Activated CD4-positive, alpha-beta T cell treated with anti-CD3 and anti-CD28 coated beads, Interleukin-2, amount 10 ng/mL, durations not matched to agents 24 days and 14 days (primary cell): ENCODE measurements at regions of chr6 and their contacts with region 1.

Region 1: DNA sequence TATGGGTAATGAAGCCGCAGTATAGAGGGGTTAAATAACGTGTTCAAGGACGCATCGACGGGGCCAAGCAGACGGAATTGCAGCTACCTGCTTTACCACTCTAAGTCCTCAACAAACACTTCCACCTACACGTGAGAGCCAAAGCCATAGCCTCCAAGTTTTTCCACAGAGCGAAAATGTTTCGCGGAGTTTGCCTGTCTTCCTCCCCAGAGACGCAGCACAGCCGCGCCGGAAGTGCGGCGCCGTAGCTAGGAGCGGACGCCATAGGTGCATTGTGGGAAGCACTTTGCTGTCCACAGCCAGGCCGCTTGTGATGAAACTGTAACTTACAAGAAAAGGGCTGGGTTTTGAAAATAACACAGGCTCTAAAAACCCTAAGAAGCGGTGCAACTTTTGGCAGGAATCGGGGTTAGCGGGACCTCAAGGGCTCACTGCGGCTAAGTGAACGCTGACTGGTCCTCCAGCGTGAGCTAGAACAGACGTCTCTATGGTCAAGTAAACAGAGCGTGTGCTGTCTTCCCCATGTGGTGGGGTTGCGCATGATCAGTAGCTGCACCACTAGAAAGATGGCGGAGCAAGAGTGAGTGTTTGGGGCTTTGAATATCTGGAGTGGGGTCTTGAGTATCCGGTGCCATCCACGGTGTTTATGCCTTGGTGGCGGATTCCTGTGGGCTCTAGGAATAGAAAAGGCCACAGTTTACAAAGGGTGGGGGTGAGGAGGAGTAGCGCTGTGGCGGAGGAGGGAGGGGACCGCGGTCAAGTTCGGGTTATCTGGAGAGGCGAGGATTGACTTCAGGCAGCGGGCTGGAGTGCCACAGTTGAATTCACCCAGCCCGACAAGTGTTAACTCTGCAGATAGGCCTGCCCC is at the start of gene RPL7L1:
- DNase-seq: peak; percentile 95
- H3K4me3 Mint-ChIP-seq: peak within 1 kb of the TSS; percentile 97
- H3K27ac Mint-ChIP-seq: peak within 1 kb of the TSS; percentile 100
- H3K4me1 Mint-ChIP-seq: peaks cover 17% of the 10 kb centered on the region
- H3K27me3 Mint-ChIP-seq: no peaks in the 10 kb centered on the region
- total RNA-seq, gene RPL7L1: 182 and 189 TPM in 2 replicates

Region 2: GRCh38 chr6:42217519-42218367 is 661.9 kb before region 1 on chr6 and contains the start of gene MRPS10:
- intact Hi-C with region 1: loop called (anchors 5 kb)
- DNase-seq: peak; percentile 97
- H3K4me3 Mint-ChIP-seq: peak within 1 kb of the TSS; percentile 98
- H3K27ac Mint-ChIP-seq: peak within 1 kb of the TSS; percentile 93
- H3K4me1 Mint-ChIP-seq: peaks cover 21% of the 10 kb centered on the region
- H3K27me3 Mint-ChIP-seq: no peaks in the 10 kb centered on the region
- total RNA-seq, gene MRPS10: 49.4 and 50.8 TPM in 2 replicates

Region 3: DNA sequence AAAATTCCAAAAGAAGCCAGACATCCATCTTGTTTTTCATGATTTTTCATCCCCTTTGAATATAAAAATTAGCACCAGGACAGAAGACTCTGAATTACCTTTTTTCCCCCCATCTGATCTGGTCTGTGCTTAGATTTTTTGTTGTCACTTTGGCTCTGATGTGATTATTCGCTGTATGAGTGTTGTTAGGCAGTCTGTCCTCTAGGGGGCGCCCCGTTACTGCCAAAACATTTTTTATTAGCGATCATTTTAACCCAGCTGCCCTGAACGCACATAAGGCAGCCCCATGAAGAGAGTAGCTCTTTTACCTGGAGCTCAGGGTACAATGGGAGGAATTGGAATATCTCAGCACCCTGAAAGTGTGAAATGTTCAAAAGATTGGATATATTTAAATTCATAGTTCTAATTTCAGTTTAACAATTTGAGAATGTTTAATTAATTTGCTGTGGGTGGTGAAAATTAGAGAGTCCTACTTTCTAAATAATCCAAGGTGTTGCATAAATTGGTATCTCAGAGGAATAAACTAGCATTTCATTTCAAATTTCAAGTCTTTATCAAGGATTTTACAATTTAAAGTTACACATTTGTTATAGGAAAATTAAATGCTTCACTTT is 218.0 kb before region 1 on chr6:
- intact Hi-C with region 1: loop called (anchors 1 kb)
- DNase-seq: peak; percentile 94
- H3K4me3 Mint-ChIP-seq: no peak overlapping the region
- H3K27ac Mint-ChIP-seq: no peak overlapping the region
- H3K4me1 Mint-ChIP-seq: no peaks in the 10 kb centered on the region
- H3K27me3 Mint-ChIP-seq: no peaks in the 10 kb centered on the region

Region 4: DNA sequence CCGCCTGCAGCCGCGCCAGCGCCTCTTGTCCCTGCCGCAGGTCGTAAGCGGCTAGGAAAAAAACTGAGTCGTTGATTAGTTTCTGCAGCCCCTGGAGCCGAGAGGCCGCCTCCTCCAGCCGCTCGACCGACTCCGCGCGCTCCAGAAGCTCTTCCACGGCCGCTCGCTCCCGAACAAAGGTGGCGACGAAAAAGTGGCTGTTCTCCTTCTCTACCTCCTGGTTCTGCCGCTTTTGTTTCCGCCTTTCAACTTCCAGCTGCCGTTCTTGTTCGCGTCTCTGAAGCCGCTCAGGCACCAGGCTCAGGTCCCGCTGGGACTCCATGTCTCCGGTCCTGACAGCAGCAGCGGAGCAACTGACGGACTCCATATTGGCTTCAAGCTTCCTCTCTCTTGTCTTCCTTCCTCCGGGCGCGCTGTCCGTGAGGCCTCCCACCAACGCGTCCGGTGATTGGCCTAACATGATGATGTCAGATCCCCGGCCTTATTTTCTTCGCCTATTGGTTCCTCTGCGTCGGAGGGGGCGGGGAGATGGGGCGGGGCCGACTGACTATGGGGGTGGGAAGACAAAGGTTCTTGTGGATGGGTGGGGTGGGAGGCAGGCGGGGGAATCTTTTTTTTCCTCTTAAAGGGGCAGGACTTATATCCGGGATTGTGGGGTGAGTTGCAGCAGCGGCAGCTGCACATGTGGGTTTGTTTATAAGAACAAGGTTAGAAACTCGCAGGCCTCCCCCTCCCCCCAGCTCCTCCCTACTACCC is 133.7 kb before region 1 on chr6 and contains the start of gene TBCC:
- intact Hi-C with region 1: loop called (anchors 1 kb)
- DNase-seq: peak; percentile 97
- H3K4me3 Mint-ChIP-seq: peak within 1 kb of the TSS; percentile 92
- H3K27ac Mint-ChIP-seq: peak within 1 kb of the TSS; percentile 100
- H3K4me1 Mint-ChIP-seq: peaks cover 22% of the 10 kb centered on the region
- H3K27me3 Mint-ChIP-seq: no peaks in the 10 kb centered on the region
- total RNA-seq, gene TBCC: 18.4 TPM in 2 replicates

Region 5: DNA sequence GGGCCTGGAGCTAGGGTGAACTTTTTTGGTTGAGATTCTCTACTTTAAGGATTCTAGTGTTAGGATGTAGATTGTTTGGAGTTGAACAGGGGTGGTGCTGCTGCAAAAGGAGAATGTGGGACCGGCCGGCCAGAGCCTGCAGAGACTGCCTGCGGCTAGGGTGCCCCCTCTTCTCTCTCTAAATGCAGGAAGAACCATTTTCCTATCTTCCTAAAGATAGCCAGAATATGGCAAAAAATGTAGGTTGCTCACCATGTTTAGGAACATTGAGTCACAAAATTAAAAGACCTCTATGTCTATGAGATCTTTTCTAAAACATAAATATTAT is 58.3 kb before region 1 on chr6:
- intact Hi-C with region 1: no loop called
- DNase-seq: no peak
- H3K4me3 Mint-ChIP-seq: no peak overlapping the region
- H3K27ac Mint-ChIP-seq: no peak overlapping the region
- H3K4me1 Mint-ChIP-seq: peaks cover 12% of the 10 kb centered on the region
- H3K27me3 Mint-ChIP-seq: no peaks in the 10 kb centered on the region

Region 6: GRCh38 chr6:42890311-42891198 is 10.9 kb after region 1 on chr6:
- intact Hi-C with region 1: loop called (anchors 1 kb)
- DNase-seq: peak; percentile 97
- H3K4me3 Mint-ChIP-seq: peak overlapping the region; percentile 96
- H3K27ac Mint-ChIP-seq: peak overlapping the region; percentile 98
- H3K4me1 Mint-ChIP-seq: peaks cover 21% of the 10 kb centered on the region
- H3K27me3 Mint-ChIP-seq: no peaks in the 10 kb centered on the region